ENCODE measurements at regions of chr21 and their contacts with region 1.

Region 1: DNA sequence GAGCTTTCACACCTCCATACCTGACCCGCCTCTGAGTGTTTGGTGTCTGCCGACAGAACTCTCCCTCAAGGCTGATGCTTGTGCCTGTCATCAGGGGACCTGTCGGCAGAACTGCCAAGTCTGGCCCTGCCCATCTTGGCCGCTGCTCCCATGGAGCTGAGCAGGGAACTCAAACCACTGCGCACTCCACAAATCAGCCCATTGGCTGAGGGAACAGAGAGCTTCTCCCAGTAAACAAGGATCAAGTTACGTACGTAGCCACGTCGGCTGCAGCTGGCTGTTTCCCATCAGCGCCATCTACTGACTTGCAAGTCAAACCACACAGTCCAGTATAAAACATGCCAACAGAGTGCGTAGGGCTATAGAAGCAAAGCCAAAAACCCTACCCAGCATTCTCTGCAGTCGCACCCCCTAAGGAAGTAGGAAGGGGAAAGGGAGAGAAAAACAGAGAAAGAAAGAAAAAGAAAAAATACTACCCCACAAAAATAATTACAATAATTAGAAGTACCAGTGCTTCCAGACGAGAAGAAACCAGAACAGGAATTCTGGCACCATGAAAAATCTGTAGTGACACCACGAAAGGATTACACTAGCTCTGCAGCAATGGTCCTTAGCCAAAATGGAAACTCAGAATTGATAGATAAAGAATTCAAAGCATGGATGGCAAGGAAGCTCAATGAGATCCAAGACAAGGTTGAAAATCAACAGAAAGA is 13.1 kb downstream of the KRTAP13-1 start:
- DNase-seq: peak; percentile 49
- H3K4me3 ChIP-seq: peak overlapping the region; percentile 21 to 38
- H3K27ac ChIP-seq: no peak overlapping the region
- H3K4me1 ChIP-seq: peaks cover 0 to 5% of the 10 kb centered on the region in 2 experiments; a peak in 1 of 4 replicates
- H3K27me3 ChIP-seq: no peaks in the 10 kb centered on the region
- CTCF ChIP-seq: peak; percentile 70
- EP300 ChIP-seq: no peak
- RAD21 ChIP-seq: peak; percentile 63

Region 2: DNA sequence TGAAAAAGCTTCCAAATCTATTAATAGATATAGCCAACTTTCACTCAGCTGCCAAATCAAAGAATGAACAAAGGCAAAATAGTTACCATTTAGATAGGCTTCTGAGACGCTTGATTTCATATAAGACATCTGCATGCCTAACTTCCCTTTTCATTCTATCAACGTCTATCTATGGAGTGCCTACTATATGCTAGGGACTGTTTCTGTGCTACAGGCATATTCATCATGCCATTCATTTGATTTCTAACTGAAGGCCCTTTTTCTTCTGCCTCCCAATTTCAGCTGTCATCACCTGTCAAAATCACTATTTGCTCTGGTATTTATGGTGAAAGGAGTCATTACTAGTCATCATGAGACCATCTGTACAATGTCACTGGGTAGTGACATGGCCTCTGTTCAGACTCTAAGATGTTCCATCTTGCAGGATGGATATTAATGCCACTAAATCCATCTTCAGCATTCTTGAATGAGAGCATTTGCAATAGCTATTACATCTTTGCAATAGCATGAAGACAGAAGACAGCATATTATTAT is 17.4 kb before region 1 on chr21:
- CTCF ChIA-PET with region 1: interaction called, 14 read pairs
- POLR2A ChIA-PET with region 1: no interaction called
- DNase-seq: no peak
- H3K4me3 ChIP-seq: no peak overlapping the region
- H3K27ac ChIP-seq: no peak overlapping the region
- H3K4me1 ChIP-seq: no peaks in the 10 kb centered on the region
- H3K27me3 ChIP-seq: peaks cover 9% of the 10 kb centered on the region
- CTCF ChIP-seq: no peak
- EP300 ChIP-seq: no peak
- RAD21 ChIP-seq: no peak

Region 3: GRCh38 chr21:30434033-30434631 is 25.2 kb after region 1 on chr21:
- CTCF ChIA-PET with region 1: interaction called, 10 read pairs
- POLR2A ChIA-PET with region 1: no interaction called
- DNase-seq: peak; percentile 33
- H3K4me3 ChIP-seq: no peak overlapping the region
- H3K27ac ChIP-seq: no peak overlapping the region
- H3K4me1 ChIP-seq: no peaks in the 10 kb centered on the region
- H3K27me3 ChIP-seq: no peaks in the 10 kb centered on the region; the same call in 1 of the 2 replicates
- CTCF ChIP-seq: peak; percentile 65
- EP300 ChIP-seq: no peak
- RAD21 ChIP-seq: peak; percentile 44